ENCODE measurements at regions of chr7 and their contacts with region 1.

Region 1: DNA sequence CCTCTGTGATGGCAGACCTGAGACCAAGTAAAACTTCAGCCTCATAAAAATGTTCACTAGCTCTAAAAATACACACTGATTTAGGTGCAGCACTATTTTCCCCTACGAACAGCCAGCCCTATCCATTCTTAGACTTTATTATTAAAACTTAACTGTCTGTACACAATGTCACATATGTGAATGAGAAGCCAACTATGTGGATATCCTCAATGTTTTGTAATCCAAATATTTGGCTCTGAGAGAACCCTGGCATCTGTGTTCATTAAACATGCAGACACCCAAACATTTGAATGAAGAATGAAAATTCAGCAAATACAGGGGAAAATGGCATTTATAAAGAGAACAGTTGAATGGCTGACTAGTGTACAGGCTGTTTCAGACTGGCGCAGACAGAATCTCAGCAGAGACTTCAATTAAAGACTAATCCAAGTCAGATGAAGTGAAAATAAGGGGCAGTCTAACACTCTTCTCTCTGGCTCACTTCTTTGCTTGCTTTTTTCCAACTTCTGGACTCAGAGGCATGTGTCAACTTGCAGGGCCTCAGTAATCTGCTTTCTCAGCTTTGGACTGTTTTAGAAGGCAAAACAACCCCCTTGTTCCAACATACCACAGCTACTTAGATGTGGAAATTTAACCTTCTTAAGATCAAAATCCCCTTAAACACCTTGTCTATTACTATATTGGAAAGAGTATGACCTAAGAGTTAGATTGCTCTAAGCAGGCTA is 47.4 kb upstream of the FAM180A start:
- DNase-seq: no peak
- ATAC-seq: peak; percentile 18

Region 2: DNA sequence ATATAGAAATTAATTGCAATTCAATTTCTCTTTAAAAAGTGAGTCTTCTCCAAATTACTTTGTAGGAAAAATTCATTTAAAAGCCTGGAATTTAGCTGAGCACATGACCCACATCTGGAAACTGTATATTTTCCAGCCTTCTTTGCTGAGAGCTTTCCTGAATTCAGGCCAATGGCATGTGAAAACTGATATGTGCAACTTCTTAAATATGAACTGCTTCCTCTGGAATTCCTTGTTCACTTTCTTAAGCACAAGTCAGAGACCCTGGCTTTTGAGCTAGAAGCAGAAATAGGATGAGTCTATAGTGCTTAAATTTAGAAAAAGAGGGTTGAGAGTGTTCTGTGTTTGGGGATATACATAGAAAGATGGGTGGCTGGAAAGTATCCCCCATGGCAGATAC is 546.2 kb after region 1 on chr7:
- intact Hi-C with region 1: loop called (anchors 5 kb)
- DNase-seq: no peak
- ATAC-seq: no peak